Endothelial cell of umbilical vein (primary cell): ENCODE measurements at regions of chr6 and their contacts with region 1.

Region 1: GRCh38 chr6:56708810-56709597 is 66.3 kb upstream of the DST start:
- DNase-seq: peak; percentile 73
- H3K4me3 ChIP-seq: peak overlapping the region in 1 of 3 experiments; percentile 15
- H3K27ac ChIP-seq: peak overlapping the region; percentile 69
- H3K4me1 ChIP-seq: peaks cover 30% of the 10 kb centered on the region
- H3K27me3 ChIP-seq: no peaks in the 10 kb centered on the region
- CTCF ChIP-seq: peak; percentile 30 to 40
- POLR2A ChIP-seq: no peak

Region 2: DNA sequence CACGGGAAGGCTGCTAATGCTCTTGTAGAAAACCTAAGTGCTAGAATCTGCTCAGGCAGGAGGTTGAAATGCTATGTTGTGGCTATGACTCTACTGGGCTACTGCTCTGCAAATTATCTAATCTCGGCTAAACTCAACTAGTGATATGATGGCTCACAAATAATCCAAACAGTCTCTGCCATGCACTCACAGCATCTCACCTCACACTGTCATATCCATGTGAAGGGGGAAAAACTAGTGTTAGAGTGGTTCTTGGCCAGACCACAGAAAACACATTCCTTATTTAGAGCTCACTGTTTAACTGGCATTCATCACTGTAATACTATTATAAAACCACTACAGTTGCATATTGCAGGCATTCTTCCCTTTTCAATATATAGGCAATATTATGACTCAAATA is 15.5 kb after region 1 on chr6:
- CTCF ChIA-PET with region 1: interaction called, 11 read pairs
- POLR2A ChIA-PET with region 1: interaction called, 3 read pairs
- dilution Hi-C with region 1: no loop called
- intact Hi-C with region 1: no loop called
- DNase-seq: no peak
- H3K4me3 ChIP-seq: no peak overlapping the region
- H3K27ac ChIP-seq: no peak overlapping the region
- H3K4me1 ChIP-seq: peaks cover 8% of the 10 kb centered on the region
- H3K27me3 ChIP-seq: no peaks in the 10 kb centered on the region
- CTCF ChIP-seq: no peak
- POLR2A ChIP-seq: no peak